Activated CD8-positive, alpha-beta T cell treated with anti-CD3 and anti-CD28 coated beads for 36 hours (primary cell): ENCODE measurements at regions of chr12 and their contacts with region 1.

Region 1: GRCh38 chr12:51009056-51009440 is 17.1 kb downstream of the SLC11A2 start:
- DNase-seq: peak; percentile 81
- ATAC-seq: peak; percentile 96
- H3K4me3 Mint-ChIP-seq: peak overlapping the region; percentile 71
- H3K27ac Mint-ChIP-seq: peak overlapping the region; percentile 88
- H3K4me1 Mint-ChIP-seq: peaks cover 36% of the 10 kb centered on the region
- H3K27me3 Mint-ChIP-seq: no peaks in the 10 kb centered on the region
- CTCF ChIP-seq: no peak

Region 2: DNA sequence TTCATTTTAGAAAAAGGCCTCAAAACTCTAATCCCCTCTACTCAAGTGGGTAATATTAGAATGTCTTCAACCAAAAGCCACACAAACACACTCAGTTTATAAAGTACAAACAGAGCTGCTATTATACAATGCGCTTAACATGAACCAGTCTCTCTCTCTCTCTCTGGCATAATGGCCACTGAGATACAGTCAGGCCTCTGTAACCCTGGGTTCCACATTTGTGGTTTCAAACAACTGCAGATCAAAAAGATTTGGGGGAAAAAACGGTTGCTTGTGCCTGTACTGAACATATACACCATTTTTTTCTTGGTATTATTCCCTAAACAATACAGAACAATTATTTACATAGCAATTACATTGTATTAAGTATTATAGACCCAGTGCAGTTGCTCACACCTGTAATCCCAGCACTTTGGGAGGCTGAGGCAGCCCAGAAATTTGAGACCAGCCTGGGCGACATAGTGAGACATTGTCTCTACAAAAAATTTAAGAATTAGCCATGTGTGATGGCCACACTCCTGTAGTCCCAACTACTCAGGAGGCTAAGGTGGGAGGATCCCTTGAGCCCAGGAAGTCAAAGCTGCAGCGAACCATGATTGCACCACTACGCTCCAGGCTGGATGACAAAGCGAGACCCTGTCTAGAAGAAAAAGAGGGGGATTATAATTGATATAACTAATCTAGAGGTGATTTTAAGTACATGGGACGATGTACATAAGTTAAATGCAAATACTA is 11.6 kb after region 1 on chr12:
- CTCF ChIA-PET with region 1: interaction called, 17 read pairs
- POLR2A ChIA-PET with region 1: interaction called, 13 read pairs
- intact Hi-C with region 1: no loop called
- DNase-seq: no peak
- ATAC-seq: no peak
- H3K4me3 Mint-ChIP-seq: no peak overlapping the region
- H3K27ac Mint-ChIP-seq: peak overlapping the region; percentile 46
- H3K4me1 Mint-ChIP-seq: peaks cover 50% of the 10 kb centered on the region
- H3K27me3 Mint-ChIP-seq: no peaks in the 10 kb centered on the region
- CTCF ChIP-seq: no peak

Region 3: GRCh38 chr12:51262758-51263177 is 253.7 kb after region 1 on chr12:
- CTCF ChIA-PET with region 1: no interaction called
- POLR2A ChIA-PET with region 1: no interaction called
- intact Hi-C with region 1: no loop called
- DNase-seq: peak; percentile 51
- ATAC-seq: no peak
- H3K4me3 Mint-ChIP-seq: no peak overlapping the region
- H3K27ac Mint-ChIP-seq: no peak overlapping the region
- H3K4me1 Mint-ChIP-seq: peaks cover 18% of the 10 kb centered on the region
- H3K27me3 Mint-ChIP-seq: no peaks in the 10 kb centered on the region
- CTCF ChIP-seq: no peak

Region 4: GRCh38 chr12:51687614-51688013 is 678.6 kb after region 1 on chr12:
- CTCF ChIA-PET with region 1: no interaction called
- POLR2A ChIA-PET with region 1: no interaction called
- intact Hi-C with region 1: no loop called
- DNase-seq: no peak
- ATAC-seq: no peak
- H3K4me3 Mint-ChIP-seq: no peak overlapping the region
- H3K27ac Mint-ChIP-seq: no peak overlapping the region
- H3K4me1 Mint-ChIP-seq: peaks cover 2% of the 10 kb centered on the region
- H3K27me3 Mint-ChIP-seq: no peaks in the 10 kb centered on the region
- CTCF ChIP-seq: no peak